GM12878 (cell line): ENCODE measurements at regions of chr18 and their contacts with region 1.

Region 1: GRCh38 chr18:42053188-42053781 is 98.3 kb downstream of the PIK3C3 start:
- DNase-seq: peak; percentile 4
- ATAC-seq: peak; percentile 95
- H3K4me3 ChIP-seq: no peak overlapping the region
- H3K27ac ChIP-seq: no peak overlapping the region
- H3K4me1 ChIP-seq: no peaks in the 10 kb centered on the region
- H3K27me3 ChIP-seq: no peaks in the 10 kb centered on the region
- CTCF ChIP-seq: peak; percentile 68 to 80 (median 76)
- EP300 ChIP-seq: no peak
- POLR2A ChIP-seq: no peak
- RAD21 ChIP-seq: peak; percentile 60

Region 2: DNA sequence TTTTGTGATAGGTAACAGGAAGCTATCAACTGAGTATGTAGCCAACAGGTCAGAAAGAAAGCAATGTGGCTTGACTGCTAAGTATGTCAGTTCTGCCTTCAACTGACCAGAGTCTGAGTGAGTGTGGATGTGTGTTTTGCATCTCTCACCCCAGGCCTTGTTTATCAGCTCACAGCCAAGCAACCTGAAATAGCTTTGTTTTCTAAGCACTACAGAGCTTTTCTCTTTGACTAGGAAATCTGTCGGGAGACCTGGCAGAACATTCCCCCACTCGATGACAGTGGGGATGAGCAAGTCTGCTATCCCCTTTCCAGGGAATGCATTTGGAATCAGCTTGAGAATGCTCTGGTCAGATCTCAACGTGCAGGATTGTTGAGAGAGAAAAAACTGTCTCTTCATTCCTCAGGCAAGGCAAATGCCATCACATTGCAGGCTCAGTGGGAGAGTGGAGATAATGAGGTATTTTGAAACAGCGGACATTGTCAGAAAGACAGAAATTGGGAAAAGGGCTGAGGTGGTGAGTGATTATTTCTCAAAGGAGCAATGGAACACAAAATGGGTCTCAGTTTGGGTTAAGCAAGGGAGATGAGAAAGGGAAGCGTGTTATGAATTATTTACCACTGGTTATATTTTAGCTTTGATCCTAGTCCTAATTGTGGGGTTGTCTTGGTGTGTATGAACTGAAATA is 332.0 kb before region 1 on chr18:
- CTCF ChIA-PET with region 1: no interaction called
- POLR2A ChIA-PET with region 1: no interaction called
- RAD21 ChIA-PET with region 1: no interaction called
- SMC1A ChIA-PET with region 1: no interaction called
- in situ Hi-C with region 1: no loop called
- intact Hi-C with region 1: no loop called
- DNase-seq: no peak
- ATAC-seq: no peak
- H3K4me3 ChIP-seq: no peak overlapping the region
- H3K27ac ChIP-seq: no peak overlapping the region
- H3K4me1 ChIP-seq: no peaks in the 10 kb centered on the region
- H3K27me3 ChIP-seq: no peaks in the 10 kb centered on the region; a peak in 1 of 4 replicates
- CTCF ChIP-seq: no peak
- EP300 ChIP-seq: no peak
- POLR2A ChIP-seq: no peak
- RAD21 ChIP-seq: no peak

Region 3: DNA sequence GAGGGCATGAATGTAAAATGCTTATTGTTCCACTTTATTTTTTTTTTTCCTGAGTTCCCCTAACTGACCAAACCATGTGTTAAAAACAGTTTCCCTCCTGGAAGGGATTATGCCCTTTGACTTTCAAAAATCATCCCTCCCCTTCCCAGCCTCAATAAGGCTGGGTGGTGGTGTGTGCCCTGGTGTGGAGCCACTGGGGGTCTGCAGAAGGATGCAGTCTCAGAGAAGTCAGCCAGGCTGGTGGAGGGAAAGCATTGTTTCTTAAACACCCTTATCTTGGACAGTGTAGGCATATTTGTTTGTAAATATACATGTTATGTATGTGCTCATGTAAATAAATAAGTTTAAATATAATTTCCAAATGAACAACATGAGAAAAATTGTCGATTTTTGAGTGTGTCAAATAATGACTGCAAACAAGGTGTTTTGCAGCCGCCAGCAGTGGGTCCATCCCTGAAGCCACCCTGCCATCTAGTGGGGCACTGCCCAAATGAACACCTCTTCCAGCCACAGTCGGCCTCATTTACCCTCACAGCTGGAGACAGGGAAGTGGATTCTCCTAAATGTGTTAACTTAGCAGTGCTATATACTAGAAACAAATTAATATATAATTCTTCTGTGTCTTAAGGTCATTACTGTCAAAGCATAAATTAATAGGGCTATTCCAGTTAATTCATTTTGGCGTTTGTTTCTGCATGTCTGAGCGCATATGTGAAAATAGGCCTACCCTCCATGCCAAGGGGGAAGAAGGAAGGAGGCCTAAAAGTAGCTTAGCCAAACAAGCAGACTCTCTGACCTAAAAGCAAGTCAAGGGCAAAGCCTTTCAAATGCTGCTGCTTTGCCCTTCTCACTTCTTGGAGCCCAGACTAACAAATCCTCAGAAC is 307.9 kb before region 1 on chr18:
- CTCF ChIA-PET with region 1: no interaction called
- POLR2A ChIA-PET with region 1: no interaction called
- RAD21 ChIA-PET with region 1: no interaction called
- SMC1A ChIA-PET with region 1: no interaction called
- in situ Hi-C with region 1: no loop called
- intact Hi-C with region 1: no loop called
- DNase-seq: no peak
- ATAC-seq: peak; percentile 91
- H3K4me3 ChIP-seq: no peak overlapping the region
- H3K27ac ChIP-seq: no peak overlapping the region
- H3K4me1 ChIP-seq: no peaks in the 10 kb centered on the region
- H3K27me3 ChIP-seq: no peaks in the 10 kb centered on the region
- CTCF ChIP-seq: peak; percentile 52 to 66 (median 54); a peak in 5 of 6 replicates
- EP300 ChIP-seq: no peak
- POLR2A ChIP-seq: no peak
- RAD21 ChIP-seq: peak; percentile 62

Region 4: GRCh38 chr18:42018831-42019230 is 34.5 kb before region 1 on chr18:
- CTCF ChIA-PET with region 1: interaction called, 26 read pairs
- POLR2A ChIA-PET with region 1: no interaction called
- RAD21 ChIA-PET with region 1: no interaction called
- SMC1A ChIA-PET with region 1: interaction called, 3 read pairs
- in situ Hi-C with region 1: no loop called
- intact Hi-C with region 1: no loop called
- DNase-seq: no peak
- ATAC-seq: peak; percentile 40
- H3K4me3 ChIP-seq: no peak overlapping the region
- H3K27ac ChIP-seq: peak overlapping the region; percentile 33; the same call in 1 of the 2 replicates
- H3K4me1 ChIP-seq: peaks cover 10% of the 10 kb centered on the region; the same call in 1 of the 2 replicates
- H3K27me3 ChIP-seq: no peaks in the 10 kb centered on the region
- CTCF ChIP-seq: no peak
- EP300 ChIP-seq: no peak
- POLR2A ChIP-seq: no peak
- RAD21 ChIP-seq: no peak

Region 5: GRCh38 chr18:42038936-42039335 is 14.3 kb before region 1 on chr18:
- CTCF ChIA-PET with region 1: interaction called, 98 read pairs
- POLR2A ChIA-PET with region 1: no interaction called
- RAD21 ChIA-PET with region 1: interaction called, 7 read pairs
- SMC1A ChIA-PET with region 1: interaction called, 7 read pairs
- in situ Hi-C with region 1: no loop called
- intact Hi-C with region 1: no loop called
- DNase-seq: no peak
- ATAC-seq: no peak
- H3K4me3 ChIP-seq: no peak overlapping the region
- H3K27ac ChIP-seq: no peak overlapping the region
- H3K4me1 ChIP-seq: no peaks in the 10 kb centered on the region
- H3K27me3 ChIP-seq: no peaks in the 10 kb centered on the region
- CTCF ChIP-seq: no peak
- EP300 ChIP-seq: no peak
- POLR2A ChIP-seq: no peak
- RAD21 ChIP-seq: no peak

Region 6: DNA sequence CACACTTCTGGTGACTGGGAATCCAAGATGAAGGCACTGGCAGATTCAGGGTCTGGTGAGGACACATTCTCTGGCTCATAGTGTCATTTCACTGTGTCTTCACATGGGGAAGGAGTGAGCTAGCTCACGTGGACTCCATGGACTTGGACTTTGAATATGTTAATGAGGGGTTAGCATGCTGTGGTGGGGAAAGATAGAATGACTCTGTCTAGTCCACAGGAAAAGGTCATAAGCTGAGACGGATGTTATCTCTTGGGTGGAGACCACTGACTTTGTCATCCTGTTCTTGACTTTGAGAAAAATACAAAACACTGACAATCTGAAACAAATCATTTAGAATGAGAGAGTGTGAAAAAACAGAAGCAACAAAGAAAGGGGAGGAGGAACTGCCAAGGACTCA is 47.6 kb after region 1 on chr18:
- CTCF ChIA-PET with region 1: interaction called, 11 read pairs
- POLR2A ChIA-PET with region 1: no interaction called
- RAD21 ChIA-PET with region 1: no interaction called
- SMC1A ChIA-PET with region 1: interaction called, 8 read pairs
- in situ Hi-C with region 1: no loop called
- intact Hi-C with region 1: no loop called
- DNase-seq: no peak
- ATAC-seq: no peak; the same call in 2 of the 3 replicates
- H3K4me3 ChIP-seq: no peak overlapping the region
- H3K27ac ChIP-seq: no peak overlapping the region
- H3K4me1 ChIP-seq: no peaks in the 10 kb centered on the region
- H3K27me3 ChIP-seq: no peaks in the 10 kb centered on the region
- CTCF ChIP-seq: no peak
- EP300 ChIP-seq: no peak
- POLR2A ChIP-seq: no peak
- RAD21 ChIP-seq: no peak

Region 7: DNA sequence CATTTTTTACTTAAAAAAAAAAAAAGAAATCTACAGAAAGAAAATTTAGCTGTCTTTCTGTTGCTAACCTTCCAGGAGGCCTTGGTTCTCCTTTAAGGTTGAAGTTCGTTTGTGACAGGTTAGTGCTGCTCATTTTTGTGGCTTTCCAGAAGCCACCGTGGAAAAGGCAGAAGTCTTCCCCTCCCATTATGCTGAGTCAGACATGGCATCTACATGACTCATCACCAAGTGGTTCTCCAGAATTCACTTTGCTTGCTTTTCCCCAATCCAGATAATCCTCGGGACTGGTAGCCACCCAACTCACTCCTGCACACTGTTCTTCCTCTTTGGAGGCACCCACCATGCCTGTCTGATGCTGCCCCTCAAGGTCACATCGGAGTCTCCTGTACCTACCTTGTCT is 130.5 kb after region 1 on chr18:
- CTCF ChIA-PET with region 1: interaction called, 4 read pairs
- POLR2A ChIA-PET with region 1: no interaction called
- RAD21 ChIA-PET with region 1: interaction called, 9 read pairs
- SMC1A ChIA-PET with region 1: interaction called, 11 read pairs
- in situ Hi-C with region 1: no loop called
- intact Hi-C with region 1: no loop called
- DNase-seq: no peak
- ATAC-seq: no peak
- H3K4me3 ChIP-seq: no peak overlapping the region
- H3K27ac ChIP-seq: no peak overlapping the region
- H3K4me1 ChIP-seq: no peaks in the 10 kb centered on the region
- H3K27me3 ChIP-seq: no peaks in the 10 kb centered on the region
- CTCF ChIP-seq: no peak
- EP300 ChIP-seq: no peak
- POLR2A ChIP-seq: no peak
- RAD21 ChIP-seq: no peak

Region 8: DNA sequence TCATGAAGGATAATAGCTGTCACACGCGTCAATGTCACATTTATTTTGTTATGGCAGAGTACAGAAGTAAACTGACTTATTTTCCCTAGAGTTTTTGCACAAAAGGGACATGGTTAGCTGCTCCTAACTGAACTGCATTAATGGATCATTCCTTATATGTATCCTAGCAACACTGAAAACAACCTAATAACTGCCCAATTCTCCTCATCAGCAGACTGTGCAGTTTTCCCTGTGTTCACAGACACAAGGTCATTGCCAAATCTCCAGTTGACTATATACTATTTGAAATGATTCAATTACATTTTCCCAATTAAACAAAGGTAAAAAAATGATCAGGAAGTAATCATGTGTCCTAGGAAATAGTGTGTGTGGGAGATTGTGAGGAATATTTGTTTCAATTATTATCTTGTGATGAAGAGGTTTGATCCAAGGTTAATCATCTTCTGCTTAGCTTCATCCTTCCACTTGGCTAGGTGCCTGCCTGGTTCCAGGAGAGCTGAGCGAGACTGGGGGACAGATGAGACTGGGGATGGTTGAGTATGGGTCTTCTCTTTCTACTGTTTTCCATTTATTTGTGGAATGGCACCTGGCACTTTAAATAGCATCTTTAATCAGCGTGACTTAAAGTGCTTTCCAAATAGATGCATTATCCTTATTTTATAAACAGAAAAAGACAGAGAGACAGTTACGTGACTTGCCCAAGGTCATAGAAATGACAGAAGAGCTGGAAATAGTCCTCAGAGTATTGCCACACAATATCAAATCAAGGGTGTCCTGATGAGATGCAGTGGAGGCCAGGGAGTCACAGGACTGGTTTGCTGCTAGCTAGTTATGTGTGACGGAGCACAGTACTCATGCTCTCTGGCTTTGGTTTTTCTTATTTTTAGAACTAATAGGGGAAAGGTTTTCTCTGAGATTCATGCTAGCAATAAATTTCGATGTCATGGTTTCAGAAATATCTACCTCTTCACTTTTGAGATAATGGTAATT is 237.3 kb after region 1 on chr18:
- CTCF ChIA-PET with region 1: interaction called, 11 read pairs
- POLR2A ChIA-PET with region 1: no interaction called
- RAD21 ChIA-PET with region 1: interaction called, 6 read pairs
- SMC1A ChIA-PET with region 1: interaction called, 6 read pairs
- in situ Hi-C with region 1: no loop called
- intact Hi-C with region 1: no loop called
- DNase-seq: no peak
- ATAC-seq: no peak
- H3K4me3 ChIP-seq: no peak overlapping the region
- H3K27ac ChIP-seq: no peak overlapping the region
- H3K4me1 ChIP-seq: no peaks in the 10 kb centered on the region
- H3K27me3 ChIP-seq: no peaks in the 10 kb centered on the region
- CTCF ChIP-seq: no peak
- EP300 ChIP-seq: no peak
- POLR2A ChIP-seq: no peak
- RAD21 ChIP-seq: no peak

Region 9: DNA sequence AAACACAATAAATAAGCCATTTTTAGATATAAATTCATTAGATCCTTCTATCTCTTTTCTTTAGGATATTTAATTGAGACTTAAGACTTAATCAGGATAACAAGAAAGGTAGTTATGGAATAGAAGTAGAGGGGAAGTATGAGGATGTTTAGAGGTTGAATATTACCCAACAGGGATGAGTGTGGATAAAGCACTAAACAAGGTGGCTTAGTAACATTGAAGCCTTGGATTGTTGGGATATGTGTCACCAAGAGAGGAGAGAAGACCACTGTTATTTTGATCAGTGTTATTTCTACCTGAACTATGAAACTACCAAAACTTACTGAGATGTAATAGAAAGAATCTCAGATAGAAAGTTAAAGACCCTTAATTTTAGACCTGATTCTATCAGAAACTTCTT is 307.4 kb after region 1 on chr18:
- CTCF ChIA-PET with region 1: no interaction called
- POLR2A ChIA-PET with region 1: no interaction called
- RAD21 ChIA-PET with region 1: no interaction called
- SMC1A ChIA-PET with region 1: no interaction called
- in situ Hi-C with region 1: no loop called
- intact Hi-C with region 1: no loop called
- DNase-seq: no peak
- ATAC-seq: no peak
- H3K4me3 ChIP-seq: no peak overlapping the region
- H3K27ac ChIP-seq: no peak overlapping the region
- H3K4me1 ChIP-seq: no peaks in the 10 kb centered on the region
- H3K27me3 ChIP-seq: no peaks in the 10 kb centered on the region
- CTCF ChIP-seq: no peak
- EP300 ChIP-seq: no peak
- POLR2A ChIP-seq: no peak
- RAD21 ChIP-seq: no peak

Region 10: GRCh38 chr18:43271593-43272432 is 1218.5 kb after region 1 on chr18:
- CTCF ChIA-PET with region 1: interaction called, 31 read pairs
- POLR2A ChIA-PET with region 1: no interaction called
- RAD21 ChIA-PET with region 1: interaction called, 5 read pairs
- SMC1A ChIA-PET with region 1: interaction called, 20 read pairs
- in situ Hi-C with region 1: no loop called
- intact Hi-C with region 1: loop called (anchors 2 kb)
- DNase-seq: no peak
- ATAC-seq: peak; percentile 67
- H3K4me3 ChIP-seq: no peak overlapping the region
- H3K27ac ChIP-seq: no peak overlapping the region
- H3K4me1 ChIP-seq: no peaks in the 10 kb centered on the region
- H3K27me3 ChIP-seq: no peaks in the 10 kb centered on the region
- CTCF ChIP-seq: peak; percentile 57 to 70 (median 61)
- EP300 ChIP-seq: no peak
- POLR2A ChIP-seq: no peak
- RAD21 ChIP-seq: peak; percentile 74